ENCODE measurements at regions of chr14 and their contacts with region 1.

Region 1: DNA sequence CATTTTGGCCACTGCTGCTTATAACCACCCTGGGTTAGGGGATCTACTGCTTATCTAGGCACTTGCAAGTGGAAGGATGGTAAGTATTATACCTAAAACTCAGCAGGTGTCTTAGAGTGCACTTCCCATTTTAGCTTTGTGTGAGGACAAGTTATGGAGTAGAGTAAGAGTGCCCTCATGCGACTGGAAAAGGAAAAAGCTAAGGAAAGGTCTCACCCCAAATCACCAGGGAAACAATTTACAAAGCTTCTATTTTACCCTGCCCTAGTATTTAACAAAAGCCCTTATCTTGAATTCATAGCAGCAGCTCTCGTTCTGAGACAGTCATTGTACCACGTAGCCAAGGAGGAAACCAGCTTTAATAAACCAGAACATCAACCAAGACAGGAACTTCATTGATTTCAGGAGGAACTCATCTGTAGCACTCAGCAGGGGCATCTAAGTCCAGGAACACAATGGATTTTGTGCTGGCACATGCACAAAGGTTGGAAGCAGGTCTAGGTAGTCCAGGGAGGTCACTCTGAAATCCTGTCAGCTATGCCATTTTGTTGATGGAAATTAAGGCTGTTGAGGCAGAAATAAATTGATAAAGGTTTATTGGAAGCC is 2.9 kb downstream of the RDH12 start:
- DNase-seq: peak; percentile 68
- H3K4me3 ChIP-seq: no peak overlapping the region
- H3K27ac ChIP-seq: no peak overlapping the region
- H3K4me1 ChIP-seq: no peaks in the 10 kb centered on the region
- H3K27me3 ChIP-seq: peaks cover 0 to 6% of the 10 kb centered on the region in 2 experiments
- CTCF ChIP-seq: peak; percentile 52 to 61
- POLR2A ChIP-seq: no peak

Region 2: DNA sequence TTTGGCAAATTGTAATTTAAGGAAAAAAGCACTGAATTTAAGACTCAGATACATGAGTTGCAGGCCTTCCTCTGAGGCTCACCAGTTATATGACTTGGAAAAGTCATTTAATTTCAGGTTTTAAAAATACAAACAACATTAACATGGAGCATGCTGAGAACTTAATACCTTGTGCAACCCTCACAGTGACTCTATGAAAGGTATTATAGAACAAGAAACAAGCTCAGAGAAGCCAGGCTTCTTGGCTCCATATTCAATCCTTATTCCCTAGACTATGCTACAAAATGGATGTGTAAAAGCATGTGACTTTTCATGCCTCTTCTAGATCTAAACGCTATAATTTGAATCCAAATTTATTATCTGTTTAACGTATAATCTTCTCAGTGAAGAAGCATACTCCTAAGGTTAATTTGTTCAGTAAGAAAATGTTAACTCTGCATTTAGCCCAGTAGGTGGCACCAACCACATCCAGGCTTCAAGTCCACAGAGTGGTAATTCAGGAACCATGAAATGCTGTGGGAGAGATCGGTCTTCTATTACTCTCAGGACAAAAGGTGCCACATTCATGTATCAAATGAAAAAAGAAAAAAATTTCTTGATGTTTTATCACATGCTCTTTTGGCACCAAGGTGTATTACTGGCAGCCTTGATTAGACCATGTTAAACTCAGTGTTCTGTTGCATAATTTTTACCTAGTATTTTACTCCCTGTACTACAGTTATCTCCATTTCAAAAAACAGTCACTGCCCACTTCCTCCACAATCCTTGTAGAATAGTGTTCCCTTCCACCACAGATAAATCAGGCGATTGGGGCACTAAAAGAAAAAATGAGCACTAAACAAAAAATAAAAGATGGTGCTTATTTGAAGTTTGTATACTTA is 1209.1 kb before region 1 on chr14:
- CTCF ChIA-PET with region 1: interaction called, 7 read pairs
- POLR2A ChIA-PET with region 1: no interaction called
- dilution Hi-C with region 1: no loop called
- intact Hi-C with region 1: loop called (anchors 10 kb)
- DNase-seq: peak; percentile 71
- H3K4me3 ChIP-seq: no peak overlapping the region
- H3K27ac ChIP-seq: no peak overlapping the region
- H3K4me1 ChIP-seq: no peaks in the 10 kb centered on the region
- H3K27me3 ChIP-seq: no peaks in the 10 kb centered on the region
- CTCF ChIP-seq: peak; percentile 59 to 61
- POLR2A ChIP-seq: no peak

Region 3: DNA sequence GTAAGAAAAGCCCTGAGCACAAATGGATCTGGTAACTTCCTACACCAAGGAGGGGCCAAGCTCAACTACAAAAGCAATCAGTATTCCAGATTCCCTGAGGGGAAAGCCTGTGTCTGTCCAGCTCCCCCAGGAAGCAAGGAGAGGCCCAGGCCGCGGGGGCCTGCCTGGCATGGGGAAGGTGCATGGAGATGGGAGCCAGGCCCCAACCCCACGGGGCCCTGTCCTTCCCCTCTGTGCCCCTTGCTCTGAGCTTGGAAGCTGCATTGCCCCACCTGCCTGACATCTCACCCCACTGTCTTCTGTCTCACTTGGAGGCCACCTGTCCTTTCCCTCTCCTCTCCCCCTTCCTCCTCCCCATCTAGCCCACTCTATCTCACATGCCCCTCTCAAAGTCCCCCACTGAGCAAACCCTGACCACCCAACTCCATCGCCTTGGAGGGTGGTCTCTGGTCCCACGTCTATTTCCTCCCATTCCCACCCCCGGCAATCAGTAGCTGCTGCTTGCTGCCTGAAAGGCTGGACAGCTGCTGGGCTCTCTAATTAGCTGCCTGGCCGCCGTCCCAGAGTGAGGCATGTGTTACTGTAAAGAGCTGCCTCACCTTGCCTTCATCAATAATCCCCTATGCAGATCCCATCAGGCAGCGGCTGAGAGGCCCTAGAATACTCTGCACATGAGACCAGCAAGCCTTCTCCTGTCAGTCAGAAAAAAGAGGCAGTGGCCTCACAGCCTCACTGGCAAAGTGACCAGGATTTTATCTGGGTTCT is 212.7 kb before region 1 on chr14:
- CTCF ChIA-PET with region 1: no interaction called
- POLR2A ChIA-PET with region 1: no interaction called
- dilution Hi-C with region 1: no loop called
- intact Hi-C with region 1: no loop called
- DNase-seq: no peak
- H3K4me3 ChIP-seq: no peak overlapping the region
- H3K27ac ChIP-seq: no peak overlapping the region
- H3K4me1 ChIP-seq: no peaks in the 10 kb centered on the region
- H3K27me3 ChIP-seq: peaks cover 0 to 2% of the 10 kb centered on the region in 2 experiments
- CTCF ChIP-seq: no peak
- POLR2A ChIP-seq: no peak

Region 4: DNA sequence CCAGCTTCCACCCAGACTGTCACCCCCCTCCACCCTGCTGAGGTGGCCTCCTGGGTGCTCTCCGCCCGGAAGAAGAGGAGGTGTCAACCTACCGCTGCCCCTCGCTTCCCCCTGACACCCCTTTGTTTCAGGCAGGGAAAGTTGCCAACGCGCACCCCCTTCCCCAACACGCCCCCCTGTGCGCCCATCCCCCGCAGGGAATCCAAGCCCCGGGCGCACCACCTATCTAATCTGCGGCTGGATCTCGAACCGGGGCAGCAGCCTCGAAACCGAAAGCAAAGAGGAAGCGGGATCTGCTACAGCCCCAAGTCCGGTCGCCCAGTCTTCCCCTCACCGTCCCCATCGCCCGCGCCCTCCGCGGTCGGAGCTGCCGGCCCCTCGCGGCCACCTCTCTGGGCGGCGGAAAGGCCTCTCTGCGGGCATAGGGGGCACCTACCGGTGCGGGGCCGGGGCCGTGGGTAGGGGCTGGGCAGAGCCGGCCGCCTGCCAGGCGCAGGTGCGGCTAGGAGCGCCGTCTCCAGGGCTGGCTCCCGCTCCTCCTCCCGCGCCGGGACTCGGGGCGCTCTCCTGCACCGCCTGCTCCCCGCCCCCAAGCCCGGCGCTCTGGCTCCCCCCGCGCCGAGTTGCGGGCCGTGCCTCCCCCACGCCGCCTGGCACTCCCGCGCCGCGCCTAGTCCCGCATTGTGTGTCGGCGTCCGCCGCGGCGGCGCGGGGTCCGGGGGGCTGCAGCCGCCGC is 189.8 kb before region 1 on chr14:
- CTCF ChIA-PET with region 1: interaction called, 10 read pairs
- POLR2A ChIA-PET with region 1: no interaction called
- dilution Hi-C with region 1: no loop called
- intact Hi-C with region 1: no loop called
- DNase-seq: peak; percentile 15
- H3K4me3 ChIP-seq: peak overlapping the region; percentile 58 to 81 (median 71)
- H3K27ac ChIP-seq: no peak overlapping the region
- H3K4me1 ChIP-seq: peaks cover 3% of the 10 kb centered on the region
- H3K27me3 ChIP-seq: peaks cover 37 to 64% of the 10 kb centered on the region in 2 experiments
- CTCF ChIP-seq: no peak
- POLR2A ChIP-seq: no peak

Region 5: DNA sequence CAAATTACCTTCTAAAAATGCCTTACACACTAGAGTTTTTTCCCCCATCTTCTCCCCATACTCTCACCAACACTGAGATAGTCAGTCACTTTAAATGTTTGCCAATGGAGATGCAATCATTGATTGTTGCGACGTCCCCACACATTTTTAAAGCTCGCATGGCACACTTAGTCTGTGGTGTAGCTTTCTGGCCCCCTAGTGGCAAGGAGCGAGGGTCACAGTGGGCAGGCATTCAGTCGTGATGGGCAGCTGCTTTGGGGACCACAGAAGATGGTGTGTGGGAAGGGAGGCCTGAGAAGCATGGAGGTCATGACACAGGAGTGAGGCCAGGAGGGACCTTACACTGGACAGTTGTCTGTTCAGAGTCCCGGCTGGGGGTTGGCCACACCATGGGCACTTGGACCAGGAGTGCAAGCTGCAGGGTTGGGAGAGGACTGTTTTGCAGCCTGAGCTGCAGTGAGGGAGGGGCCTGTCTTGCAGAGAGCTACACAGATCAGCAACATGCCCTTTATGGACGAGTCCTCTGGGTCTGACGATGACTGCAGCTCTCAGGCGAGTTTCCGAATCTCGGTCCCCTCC is 133.2 kb before region 1 on chr14:
- CTCF ChIA-PET with region 1: interaction called, 41 read pairs
- POLR2A ChIA-PET with region 1: no interaction called
- dilution Hi-C with region 1: no loop called
- intact Hi-C with region 1: no loop called
- DNase-seq: peak; percentile 54
- H3K4me3 ChIP-seq: no peak overlapping the region
- H3K27ac ChIP-seq: no peak overlapping the region
- H3K4me1 ChIP-seq: no peaks in the 10 kb centered on the region
- H3K27me3 ChIP-seq: peaks cover 0 to 5% of the 10 kb centered on the region in 2 experiments
- CTCF ChIP-seq: peak; percentile 89 to 93
- POLR2A ChIP-seq: no peak

Region 6: GRCh38 chr14:67619446-67620216 is 85.0 kb before region 1 on chr14 and contains the start of gene ARG2:
- CTCF ChIA-PET with region 1: interaction called, 136 read pairs
- POLR2A ChIA-PET with region 1: no interaction called
- dilution Hi-C with region 1: no loop called
- intact Hi-C with region 1: loop called (anchors 1 kb)
- DNase-seq: peak; percentile 96
- H3K4me3 ChIP-seq: peak within 1 kb of the TSS; percentile 63 to 73 (median 67)
- H3K27ac ChIP-seq: peak within 1 kb of the TSS; percentile 71
- H3K4me1 ChIP-seq: peaks cover 28% of the 10 kb centered on the region
- H3K27me3 ChIP-seq: peaks cover 2 to 4% of the 10 kb centered on the region in 2 experiments
- CTCF ChIP-seq: no peak
- POLR2A ChIP-seq: no peak
- total RNA-seq, gene ARG2: 19.8 and 22.5 TPM in 2 replicates

Region 7: GRCh38 chr14:67719866-67720265 is 15.3 kb after region 1 on chr14:
- CTCF ChIA-PET with region 1: interaction called, 46 read pairs
- POLR2A ChIA-PET with region 1: no interaction called
- dilution Hi-C with region 1: no loop called
- intact Hi-C with region 1: no loop called
- DNase-seq: no peak
- H3K4me3 ChIP-seq: no peak overlapping the region
- H3K27ac ChIP-seq: no peak overlapping the region
- H3K4me1 ChIP-seq: no peaks in the 10 kb centered on the region
- H3K27me3 ChIP-seq: peaks cover 27 to 32% of the 10 kb centered on the region in 2 experiments
- CTCF ChIP-seq: no peak
- POLR2A ChIP-seq: no peak

Region 8: DNA sequence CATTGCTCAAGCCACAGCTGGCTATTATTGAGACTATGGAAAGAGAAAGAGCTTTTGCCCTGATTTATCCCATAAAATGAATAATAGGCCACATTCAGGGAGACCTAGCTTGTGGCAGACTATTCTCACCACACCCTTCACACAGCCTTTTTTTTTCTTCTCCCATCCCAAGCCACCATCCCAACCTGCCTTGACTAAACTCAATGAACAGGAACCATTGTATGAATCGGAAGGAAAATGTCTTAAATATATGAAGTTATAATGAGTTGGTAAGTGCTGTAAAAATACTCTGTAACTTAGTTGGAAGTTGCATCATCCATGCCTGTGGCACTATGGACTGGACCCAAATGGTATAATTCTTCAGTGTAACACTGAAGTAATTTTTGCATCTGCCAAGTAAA is 453.4 kb after region 1 on chr14:
- CTCF ChIA-PET with region 1: no interaction called
- POLR2A ChIA-PET with region 1: no interaction called
- dilution Hi-C with region 1: no loop called
- intact Hi-C with region 1: no loop called
- DNase-seq: no peak
- H3K4me3 ChIP-seq: no peak overlapping the region
- H3K27ac ChIP-seq: no peak overlapping the region
- H3K4me1 ChIP-seq: no peaks in the 10 kb centered on the region
- H3K27me3 ChIP-seq: no peaks in the 10 kb centered on the region
- CTCF ChIP-seq: no peak
- POLR2A ChIP-seq: no peak

Region 9: GRCh38 chr14:68816262-68816942 is 1111.8 kb after region 1 on chr14:
- CTCF ChIA-PET with region 1: no interaction called
- POLR2A ChIA-PET with region 1: no interaction called
- dilution Hi-C with region 1: no loop called
- intact Hi-C with region 1: no loop called
- DNase-seq: peak; percentile 89
- H3K4me3 ChIP-seq: peak overlapping the region in 1 of 3 experiments; percentile 24
- H3K27ac ChIP-seq: peak overlapping the region; percentile 71
- H3K4me1 ChIP-seq: peaks cover 21% of the 10 kb centered on the region
- H3K27me3 ChIP-seq: no peaks in the 10 kb centered on the region
- CTCF ChIP-seq: peak; percentile 95
- POLR2A ChIP-seq: peak; percentile 46